ENCODE measurements at regions of chr19 and their contacts with region 1.

Region 1: DNA sequence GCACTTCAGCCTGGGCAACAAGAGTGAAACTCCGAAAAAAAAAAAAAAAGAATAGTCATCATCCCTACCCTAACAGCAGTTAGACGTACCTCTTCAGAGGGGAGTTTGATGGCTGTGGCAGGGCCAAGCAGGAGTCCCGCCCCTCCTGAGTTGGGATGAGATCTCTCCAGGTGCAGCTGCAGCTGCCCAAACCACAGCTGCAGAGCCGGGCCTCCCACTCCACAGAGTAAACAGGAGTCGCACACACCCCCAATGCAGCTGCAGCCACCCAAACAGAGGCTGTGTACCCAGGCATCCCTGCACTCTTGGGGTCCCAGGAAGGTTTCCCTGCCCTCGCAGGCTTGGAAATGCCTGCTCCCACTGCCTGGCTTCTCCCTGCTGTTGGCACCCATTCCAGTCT is 17.4 kb upstream of the MLLT1 start:
- DNase-seq: no peak
- ATAC-seq: no peak

Region 2: GRCh38 chr19:6164906-6165531 is 132.2 kb before region 1 on chr19:
- intact Hi-C with region 1: loop called (anchors 5 kb)
- DNase-seq: no peak
- ATAC-seq: no peak

Region 3: DNA sequence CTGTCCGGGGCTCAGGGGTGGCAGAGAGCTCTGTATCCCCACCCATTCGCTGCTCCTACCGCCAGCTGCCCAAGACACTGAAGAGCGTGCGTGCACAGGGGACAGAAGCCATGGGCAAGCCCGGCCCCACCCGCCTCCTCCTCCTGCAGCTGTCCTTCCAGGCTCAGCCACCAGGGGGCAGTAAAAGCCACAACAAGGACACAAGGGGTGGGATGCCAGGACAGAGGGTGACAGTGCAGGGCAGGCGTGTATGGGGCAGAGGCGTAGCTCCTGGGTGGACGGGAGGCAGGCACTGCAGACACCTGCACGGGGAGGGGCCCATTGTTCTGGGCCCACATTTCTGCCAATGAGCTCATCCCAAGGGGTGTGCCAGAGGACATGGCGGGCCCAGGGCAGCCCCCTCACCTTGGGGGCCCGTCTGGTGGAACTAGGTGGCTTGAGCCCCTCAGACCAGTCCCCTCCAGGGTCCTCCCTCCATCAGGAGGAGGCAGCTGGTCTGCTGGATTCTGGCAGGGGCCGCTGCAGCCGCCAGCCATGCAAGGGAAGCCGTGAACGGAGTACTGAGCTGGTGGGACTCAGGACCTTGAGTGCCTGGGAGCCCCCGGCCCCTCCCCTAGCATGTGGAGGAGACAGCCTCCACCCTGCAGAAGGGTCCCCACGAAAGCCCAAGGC is 78.6 kb before region 1 on chr19:
- intact Hi-C with region 1: loop called (anchors 5 kb)
- DNase-seq: peak; percentile 95
- ATAC-seq: peak; percentile 80

Region 4: GRCh38 chr19:6362027-6362350 is 64.8 kb after region 1 on chr19:
- intact Hi-C with region 1: no loop called
- DNase-seq: no peak
- ATAC-seq: no peak

Measured in left ventricle myocardium superior (tissue), 1 donor.